ENCODE measurements at regions of chr4 and their contacts with region 1.

Region 1: DNA sequence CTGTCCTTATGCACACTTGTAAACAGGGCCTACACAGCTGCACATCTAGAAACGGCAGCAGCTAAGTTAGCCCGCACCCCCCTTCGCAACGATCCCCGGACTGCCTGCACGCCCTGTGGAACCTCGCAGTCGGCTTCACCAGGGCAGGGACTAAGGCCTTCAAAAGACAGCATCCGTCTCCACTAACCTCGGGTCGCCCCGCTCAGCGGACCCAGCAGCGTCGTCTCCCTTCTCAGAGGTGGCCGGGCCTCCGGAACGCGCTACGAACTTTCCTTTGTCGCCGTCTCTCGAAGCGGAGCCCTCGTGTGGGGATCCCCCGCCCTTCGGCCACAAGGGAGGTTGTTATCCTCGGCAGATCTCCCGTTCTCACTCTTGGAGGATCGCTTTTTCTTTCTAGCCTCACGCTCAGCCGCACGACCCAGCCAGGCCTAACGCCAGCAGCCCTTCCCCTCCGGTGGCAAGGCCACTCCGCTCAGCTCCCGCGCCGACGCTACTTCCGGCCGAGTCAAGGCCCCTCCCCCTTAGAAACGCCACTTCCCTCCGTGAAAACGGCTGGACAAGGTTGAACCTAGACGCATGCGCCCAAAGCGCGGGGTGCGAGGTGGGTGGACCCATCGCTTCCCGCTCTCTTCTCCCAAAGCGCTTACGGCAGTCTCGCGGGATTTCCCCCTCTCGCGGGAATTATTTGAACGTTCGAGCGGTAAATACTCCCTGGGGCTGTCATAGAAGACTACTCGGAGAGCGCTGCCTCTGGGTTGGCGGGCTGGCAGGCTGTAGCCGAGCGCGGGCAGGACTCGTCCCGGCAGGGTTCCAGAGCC is at the starts of genes DCAF16 and NCAPG:
- DNase-seq: peak; percentile 96 to 99 (median 99)
- ATAC-seq: peak; percentile 88
- H3K4me3 ChIP-seq: peak within 1 kb of the TSS; percentile 75 to 98
- H3K4me3 Mint-ChIP-seq: peak within 1 kb of the TSS; percentile 98
- H3K27ac ChIP-seq: peak within 1 kb of the TSS; percentile 88 to 97
- H3K27ac Mint-ChIP-seq: peak within 1 kb of the TSS; percentile 99
- H3K4me1 ChIP-seq: peaks cover 41% of the 10 kb centered on the region
- H3K4me1 Mint-ChIP-seq: peaks cover 54% of the 10 kb centered on the region
- H3K27me3 ChIP-seq: no peaks in the 10 kb centered on the region
- H3K27me3 Mint-ChIP-seq: no peaks in the 10 kb centered on the region
- CTCF ChIP-seq: no peak
- total RNA-seq, gene DCAF16: 82.2 to 83.4 TPM
- total RNA-seq, gene NCAPG: 0.52 to 1.3 TPM

Region 2: GRCh38 chr4:17324386-17324830 is 486.1 kb before region 1 on chr4:
- CTCF ChIA-PET with region 1: no interaction called
- POLR2A ChIA-PET with region 1: no interaction called
- intact Hi-C with region 1: loop called in 1 of 2 experiments (anchors 10 kb)
- DNase-seq: peak in 8 of 9 experiments; percentile 30 to 66 (median 55)
- ATAC-seq: peak; percentile 66
- H3K4me3 ChIP-seq: no peak overlapping the region
- H3K4me3 Mint-ChIP-seq: peak overlapping the region; percentile 56
- H3K27ac ChIP-seq: no peak overlapping the region
- H3K27ac Mint-ChIP-seq: no peak overlapping the region
- H3K4me1 ChIP-seq: peaks cover 4% of the 10 kb centered on the region
- H3K4me1 Mint-ChIP-seq: peaks cover 11% of the 10 kb centered on the region
- H3K27me3 ChIP-seq: no peaks in the 10 kb centered on the region
- H3K27me3 Mint-ChIP-seq: no peaks in the 10 kb centered on the region
- CTCF ChIP-seq: peak; percentile 61

Region 3: GRCh38 chr4:17511950-17512795 is 298.3 kb before region 1 on chr4 and contains the start of gene QDPR:
- CTCF ChIA-PET with region 1: no interaction called
- POLR2A ChIA-PET with region 1: interaction called, 4 read pairs
- intact Hi-C with region 1: loop called in 1 of 2 experiments (anchors 1 kb)
- DNase-seq: peak; percentile 38 to 86 (median 70)
- ATAC-seq: peak; percentile 91
- H3K4me3 ChIP-seq: peak within 1 kb of the TSS; percentile 63 to 80
- H3K4me3 Mint-ChIP-seq: peak within 1 kb of the TSS; percentile 99
- H3K27ac ChIP-seq: peak within 1 kb of the TSS; percentile 49 to 57
- H3K27ac Mint-ChIP-seq: peak within 1 kb of the TSS; percentile 93
- H3K4me1 ChIP-seq: peaks cover 18% of the 10 kb centered on the region
- H3K4me1 Mint-ChIP-seq: peaks cover 33% of the 10 kb centered on the region
- H3K27me3 ChIP-seq: no peaks in the 10 kb centered on the region
- H3K27me3 Mint-ChIP-seq: peaks cover 6% of the 10 kb centered on the region
- CTCF ChIP-seq: peak; percentile 30
- total RNA-seq, gene QDPR: 10.9 to 11.6 TPM

Region 4: DNA sequence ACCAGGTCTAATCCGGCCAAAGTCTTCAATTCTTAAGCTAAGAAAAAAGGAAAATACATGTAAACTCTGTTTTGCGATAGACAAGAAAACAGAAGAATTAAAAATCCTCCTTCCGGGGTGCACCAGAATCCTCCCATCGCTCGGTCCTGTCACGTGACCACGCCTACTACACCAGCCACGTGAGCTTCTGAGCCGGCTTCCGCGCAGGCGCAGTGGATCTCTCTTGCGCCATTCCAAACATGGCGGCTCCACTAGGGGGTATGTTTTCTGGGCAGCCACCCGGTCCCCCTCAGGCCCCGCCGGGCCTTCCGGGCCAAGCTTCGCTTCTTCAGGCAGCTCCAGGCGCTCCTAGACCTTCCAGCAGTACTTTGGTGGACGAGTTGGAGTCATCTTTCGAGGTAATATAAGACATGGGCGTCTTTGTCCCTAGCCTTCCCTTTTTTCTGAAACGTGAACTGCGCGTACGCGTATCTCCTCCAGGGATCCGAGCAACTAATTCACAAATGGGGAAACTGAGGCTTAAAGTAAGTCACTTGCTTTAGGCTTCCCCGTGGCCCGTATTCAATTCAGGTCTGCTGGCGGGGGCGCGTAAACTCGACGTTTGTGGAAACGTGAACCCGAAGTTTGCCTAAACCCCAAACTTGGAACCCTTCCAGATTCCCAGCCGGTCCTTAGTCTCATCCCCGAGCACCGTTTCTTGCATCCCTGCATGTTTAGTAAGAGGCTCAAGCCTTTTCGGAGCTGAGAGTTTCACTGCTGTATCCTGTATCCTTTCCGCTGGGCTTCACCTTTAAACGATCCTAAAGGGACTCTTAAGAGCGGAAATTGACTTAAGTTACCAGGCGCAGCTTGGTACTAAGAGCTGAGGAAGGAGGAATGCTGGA is 195.8 kb before region 1 on chr4 and contains the start of gene MED28:
- CTCF ChIA-PET with region 1: no interaction called
- POLR2A ChIA-PET with region 1: interaction called, 15 read pairs
- intact Hi-C with region 1: loop called (anchors 1 kb)
- DNase-seq: peak; percentile 84 to 98 (median 95)
- ATAC-seq: peak; percentile 89
- H3K4me3 ChIP-seq: peak within 1 kb of the TSS; percentile 95 to 99
- H3K4me3 Mint-ChIP-seq: peak within 1 kb of the TSS; percentile 99
- H3K27ac ChIP-seq: peak within 1 kb of the TSS; percentile 87 to 92
- H3K27ac Mint-ChIP-seq: peak within 1 kb of the TSS; percentile 97
- H3K4me1 ChIP-seq: peaks cover 41% of the 10 kb centered on the region
- H3K4me1 Mint-ChIP-seq: peaks cover 41% of the 10 kb centered on the region
- H3K27me3 ChIP-seq: no peaks in the 10 kb centered on the region
- H3K27me3 Mint-ChIP-seq: no peaks in the 10 kb centered on the region
- CTCF ChIP-seq: no peak
- total RNA-seq, gene MED28: 60.0 to 64.8 TPM

Region 5: DNA sequence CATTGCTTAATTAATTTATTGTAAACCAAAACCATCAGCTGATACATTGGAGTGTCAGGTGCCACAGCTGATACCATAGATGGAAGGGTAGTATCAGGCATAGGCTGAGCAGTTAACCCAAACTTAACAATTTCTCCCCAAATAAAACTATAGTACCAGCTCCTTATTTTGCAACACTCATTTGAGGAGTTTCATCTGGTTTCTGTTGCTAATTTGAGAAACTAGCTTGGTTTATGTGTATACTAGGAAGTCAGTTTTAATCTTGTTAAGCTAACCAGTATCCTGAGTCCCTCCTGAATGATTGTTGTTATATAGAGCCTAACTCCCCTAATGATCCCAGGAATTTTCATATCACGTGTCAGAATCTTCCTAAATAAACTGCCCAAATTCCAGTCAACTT is 12.7 kb before region 1 on chr4:
- CTCF ChIA-PET with region 1: interaction called, 27 read pairs
- POLR2A ChIA-PET with region 1: interaction called, 4 read pairs
- intact Hi-C with region 1: no loop called
- DNase-seq: no peak
- ATAC-seq: no peak
- H3K4me3 ChIP-seq: no peak overlapping the region
- H3K4me3 Mint-ChIP-seq: no peak overlapping the region
- H3K27ac ChIP-seq: no peak overlapping the region
- H3K27ac Mint-ChIP-seq: no peak overlapping the region
- H3K4me1 ChIP-seq: no peaks in the 10 kb centered on the region
- H3K4me1 Mint-ChIP-seq: peaks cover 10% of the 10 kb centered on the region
- H3K27me3 ChIP-seq: no peaks in the 10 kb centered on the region
- H3K27me3 Mint-ChIP-seq: no peaks in the 10 kb centered on the region
- CTCF ChIP-seq: no peak

Measured in CD8-positive, alpha-beta T cell (primary cell).